Activated naive CD4-positive, alpha-beta T cell treated with anti-CD3 and anti-CD28 coated beads for 36 hours (primary cell): ENCODE measurements at regions of chr15 and their contacts with region 1.

Region 1: DNA sequence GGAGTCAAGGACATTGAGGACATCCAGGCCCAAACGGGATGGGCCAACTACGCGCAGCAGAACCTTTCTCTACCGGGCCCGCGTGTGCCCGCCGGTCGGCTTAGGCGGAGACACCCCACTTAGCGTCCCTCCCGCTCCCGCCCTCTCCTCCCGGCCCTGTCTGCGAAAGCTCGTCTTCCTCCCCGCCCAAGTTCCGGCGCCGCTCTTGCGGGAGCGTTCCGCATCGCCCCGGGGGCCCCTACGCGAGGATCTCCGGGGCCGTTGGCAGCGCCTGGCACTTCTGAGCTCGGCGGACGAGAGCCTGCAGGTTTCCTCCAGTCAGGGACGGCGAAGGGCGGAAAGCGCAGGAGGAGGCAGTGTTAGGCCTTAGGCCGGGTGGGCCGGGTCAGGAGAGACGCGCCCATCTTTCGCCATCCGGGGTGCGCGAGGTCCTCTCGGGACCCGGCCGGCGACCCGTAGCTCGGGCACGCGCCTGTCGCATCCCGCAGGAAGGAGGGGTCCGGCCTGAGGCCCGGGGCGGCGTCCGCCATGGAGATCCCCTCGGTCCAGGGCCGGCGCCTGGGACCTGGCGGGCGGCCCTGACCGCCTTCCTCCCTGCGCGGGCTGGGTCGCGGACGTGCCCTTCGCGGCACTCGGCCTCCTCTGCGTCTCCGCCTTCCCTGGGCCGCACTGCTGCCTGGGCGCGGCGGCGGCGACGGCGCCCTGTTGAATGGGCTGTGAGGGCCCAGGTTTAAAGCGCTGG is at the start of gene FEM1B:
- DNase-seq: peak; percentile 89
- H3K4me3 Mint-ChIP-seq: peak within 1 kb of the TSS; percentile 97
- H3K27ac Mint-ChIP-seq: peak within 1 kb of the TSS; percentile 97
- H3K4me1 Mint-ChIP-seq: peaks cover 46% of the 10 kb centered on the region
- H3K27me3 Mint-ChIP-seq: no peaks in the 10 kb centered on the region
- total RNA-seq, gene FEM1B: 30.3 to 34.2 TPM

Region 2: GRCh38 chr15:68229386-68230156 is 48.2 kb before region 1 on chr15 and contains the start of gene CLN6:
- CTCF ChIA-PET with region 1: interaction called, 4 read pairs
- intact Hi-C with region 1: loop called (anchors 1 kb)
- DNase-seq: peak; percentile 75
- H3K4me3 Mint-ChIP-seq: peak within 1 kb of the TSS; percentile 85
- H3K27ac Mint-ChIP-seq: peak within 1 kb of the TSS; percentile 80
- H3K4me1 Mint-ChIP-seq: peaks cover 43% of the 10 kb centered on the region
- H3K27me3 Mint-ChIP-seq: no peaks in the 10 kb centered on the region
- total RNA-seq, gene CLN6: 30.5 to 34.2 TPM

Region 3: DNA sequence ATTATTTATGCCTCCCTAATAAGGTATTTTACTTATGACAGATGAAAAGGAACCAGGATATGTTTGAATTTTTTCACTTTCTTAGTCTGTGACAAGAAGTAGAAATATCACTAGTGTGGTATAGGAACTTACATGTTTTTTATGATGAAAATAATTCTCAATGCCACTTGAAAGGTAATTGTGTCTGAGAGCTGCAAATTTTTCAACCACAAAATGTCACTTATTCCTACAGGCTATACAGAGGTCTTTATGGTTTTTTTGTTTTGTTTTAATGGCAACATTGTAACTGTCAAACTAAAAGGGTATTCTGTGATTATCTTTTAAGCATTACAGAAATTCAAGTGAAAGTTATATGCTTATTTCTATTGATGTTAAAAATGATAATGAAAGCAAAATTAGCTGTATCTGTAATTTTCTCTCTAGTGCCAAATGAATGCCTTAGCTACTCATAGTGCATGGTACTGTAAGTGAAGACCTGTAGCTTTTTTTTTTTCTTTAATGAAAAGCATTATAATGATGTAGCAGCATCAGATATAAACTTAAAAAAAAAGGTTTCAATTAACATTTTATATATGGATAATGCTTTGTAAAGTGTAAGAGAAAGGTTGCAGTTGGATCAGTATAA is 14.5 kb after region 1 on chr15:
- CTCF ChIA-PET with region 1: interaction called, 22 read pairs
- intact Hi-C with region 1: loop called (anchors 2 kb)
- DNase-seq: no peak
- H3K4me3 Mint-ChIP-seq: no peak overlapping the region
- H3K27ac Mint-ChIP-seq: peak overlapping the region; percentile 38
- H3K4me1 Mint-ChIP-seq: peaks cover 47% of the 10 kb centered on the region
- H3K27me3 Mint-ChIP-seq: no peaks in the 10 kb centered on the region

Region 4: DNA sequence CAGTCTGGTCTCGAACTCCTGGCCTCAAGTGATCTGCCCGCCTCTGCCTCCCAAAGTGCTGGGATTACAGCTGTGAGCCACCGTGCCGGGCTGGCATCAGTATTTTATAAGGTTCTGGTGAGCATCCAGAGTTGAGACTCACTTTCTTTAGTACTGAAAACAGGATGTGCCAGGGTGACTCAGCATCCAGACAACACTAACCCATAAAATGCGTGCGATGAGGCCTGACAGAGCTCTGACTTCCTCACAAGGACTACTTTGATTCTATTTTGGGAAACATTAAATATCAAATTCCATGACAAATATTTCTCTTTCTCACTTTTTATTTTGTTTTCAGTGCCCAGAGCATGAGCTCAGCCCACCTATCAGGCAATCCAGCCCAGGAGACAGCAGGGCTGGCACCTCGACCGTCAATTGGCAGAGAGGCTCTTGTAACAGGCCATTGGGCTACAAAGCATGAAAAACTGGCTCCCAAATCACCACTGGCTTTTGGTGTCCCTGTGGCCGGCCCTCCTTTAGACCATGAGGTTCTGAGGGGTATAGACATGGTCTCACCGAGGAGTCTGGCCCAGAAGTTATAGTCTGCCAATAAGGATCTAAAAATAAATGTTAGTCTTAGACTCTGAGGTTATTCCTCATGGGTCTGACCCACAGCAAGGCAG is 74.8 kb after region 1 on chr15:
- CTCF ChIA-PET with region 1: no interaction called
- intact Hi-C with region 1: loop called (anchors 2 kb)
- DNase-seq: peak; percentile 82
- H3K4me3 Mint-ChIP-seq: no peak overlapping the region
- H3K27ac Mint-ChIP-seq: peak overlapping the region; percentile 87
- H3K4me1 Mint-ChIP-seq: peaks cover 18% of the 10 kb centered on the region
- H3K27me3 Mint-ChIP-seq: no peaks in the 10 kb centered on the region